Ascending aorta (tissue), 2 donors: ENCODE measurements at regions of chr11 and their contacts with region 1.

Region 1: GRCh38 chr11:92941676-92942571 is 27.5 kb upstream of the MTNR1B start:
- DNase-seq: no peak
- H3K4me3 ChIP-seq: no peak overlapping the region
- H3K27ac ChIP-seq: no peak overlapping the region
- H3K4me1 ChIP-seq: no peaks in the 10 kb centered on the region
- H3K27me3 ChIP-seq: no peaks in the 10 kb centered on the region
- CTCF ChIP-seq: peak; percentile 25 to 62 (median 39)

Region 2: DNA sequence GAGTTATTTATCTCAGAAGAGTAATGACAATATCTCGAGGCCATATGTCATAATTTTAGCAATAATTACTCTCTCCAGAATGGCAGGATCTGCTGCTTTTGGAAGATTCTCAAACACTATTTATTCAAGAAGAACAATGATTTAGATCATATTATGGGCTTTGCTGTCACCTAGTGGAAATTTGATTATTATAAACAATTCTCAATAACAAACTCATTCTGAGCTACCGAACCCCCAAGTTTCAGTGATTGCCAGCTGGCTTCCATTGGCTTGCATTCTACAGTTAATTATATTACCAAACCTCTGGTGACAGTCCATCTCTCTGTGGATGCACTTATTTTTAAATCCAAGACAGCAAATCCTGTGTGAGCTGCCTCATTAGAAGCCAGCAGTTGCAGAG is 283.7 kb after region 1 on chr11:
- intact Hi-C with region 1: loop called (anchors 10 kb)
- DNase-seq: no peak
- H3K4me3 ChIP-seq: no peak overlapping the region
- H3K27ac ChIP-seq: no peak overlapping the region
- H3K4me1 ChIP-seq: no peaks in the 10 kb centered on the region
- H3K27me3 ChIP-seq: no peaks in the 10 kb centered on the region
- CTCF ChIP-seq: peak in 2 of 3 experiments; percentile 30 to 41